Aorta (tissue), 5 donors: ENCODE measurements at regions of chr2 and their contacts with region 1.

Region 1: GRCh38 chr2:290090-290722 is 2.3 kb upstream of the ALKAL2 start:
- DNase-seq: peak; percentile 82 to 93
- ATAC-seq: peak; percentile 85
- H3K4me3 ChIP-seq: peak overlapping the region in 1 of 2 donors; percentile 11
- H3K27ac ChIP-seq: no peak overlapping the region
- H3K4me1 ChIP-seq: no peaks in the 10 kb centered on the region
- H3K27me3 ChIP-seq: no peaks in the 10 kb centered on the region

Region 2: DNA sequence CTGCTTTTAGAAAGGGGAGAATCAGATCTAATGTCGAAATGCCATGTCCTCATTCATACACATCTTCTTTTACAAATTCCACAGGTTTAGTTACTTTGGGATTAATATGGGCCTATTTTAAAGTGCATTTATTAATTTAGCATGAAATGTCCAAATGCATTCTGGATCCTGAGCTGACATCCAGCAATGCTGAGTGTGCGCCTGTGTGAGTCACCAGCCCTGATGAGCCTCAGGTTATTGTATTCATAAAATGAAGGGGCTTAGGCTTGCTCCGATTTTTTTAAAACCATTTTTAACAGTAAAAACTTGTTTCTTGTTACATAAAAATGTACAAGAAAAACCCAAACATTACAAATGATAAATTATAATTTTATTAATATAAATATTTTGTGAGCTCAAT is 120.5 kb before region 1 on chr2:
- intact Hi-C with region 1: loop called (anchors 1 to 2 kb)
- DNase-seq: no peak
- ATAC-seq: no peak
- H3K4me3 ChIP-seq: no peak overlapping the region
- H3K27ac ChIP-seq: no peak overlapping the region
- H3K4me1 ChIP-seq: no peaks in the 10 kb centered on the region
- H3K27me3 ChIP-seq: no peaks in the 10 kb centered on the region

Region 3: GRCh38 chr2:175880-176800 is 114.1 kb before region 1 on chr2:
- intact Hi-C with region 1: loop called (anchors 1 to 2 kb)
- DNase-seq: no peak
- ATAC-seq: no peak
- H3K4me3 ChIP-seq: no peak overlapping the region
- H3K27ac ChIP-seq: no peak overlapping the region
- H3K4me1 ChIP-seq: no peaks in the 10 kb centered on the region
- H3K27me3 ChIP-seq: no peaks in the 10 kb centered on the region

Region 4: GRCh38 chr2:246489-247144 is 43.6 kb before region 1 on chr2:
- intact Hi-C with region 1: loop called (anchors 5 kb)
- DNase-seq: no peak
- ATAC-seq: no peak
- H3K4me3 ChIP-seq: no peak overlapping the region
- H3K27ac ChIP-seq: no peak overlapping the region
- H3K4me1 ChIP-seq: no peaks in the 10 kb centered on the region
- H3K27me3 ChIP-seq: no peaks in the 10 kb centered on the region